CD4-positive, alpha-beta memory T cell (primary cell): ENCODE measurements at regions of chr11 and their contacts with region 1.

Region 1: GRCh38 chr11:95231127-95231880 is at the start of gene SESN3:
- DNase-seq: peak; percentile 99
- H3K4me3 ChIP-seq: peak within 1 kb of the TSS; percentile 81 to 89
- H3K4me3 Mint-ChIP-seq: peak within 1 kb of the TSS; percentile 92 to 99 (median 97)
- H3K27ac ChIP-seq: peak within 1 kb of the TSS; percentile 68
- H3K27ac Mint-ChIP-seq: peak within 1 kb of the TSS; percentile 85 to 96 (median 93)
- H3K4me1 ChIP-seq: peaks cover 50% of the 10 kb centered on the region
- H3K4me1 Mint-ChIP-seq: peaks cover 28 to 59% (median 34%) of the 10 kb centered on the region in 4 donors
- H3K27me3 ChIP-seq: no peaks in the 10 kb centered on the region
- H3K27me3 Mint-ChIP-seq: no peaks in the 10 kb centered on the region
- total RNA-seq, gene SESN3: 204 to 211 TPM

Region 2: DNA sequence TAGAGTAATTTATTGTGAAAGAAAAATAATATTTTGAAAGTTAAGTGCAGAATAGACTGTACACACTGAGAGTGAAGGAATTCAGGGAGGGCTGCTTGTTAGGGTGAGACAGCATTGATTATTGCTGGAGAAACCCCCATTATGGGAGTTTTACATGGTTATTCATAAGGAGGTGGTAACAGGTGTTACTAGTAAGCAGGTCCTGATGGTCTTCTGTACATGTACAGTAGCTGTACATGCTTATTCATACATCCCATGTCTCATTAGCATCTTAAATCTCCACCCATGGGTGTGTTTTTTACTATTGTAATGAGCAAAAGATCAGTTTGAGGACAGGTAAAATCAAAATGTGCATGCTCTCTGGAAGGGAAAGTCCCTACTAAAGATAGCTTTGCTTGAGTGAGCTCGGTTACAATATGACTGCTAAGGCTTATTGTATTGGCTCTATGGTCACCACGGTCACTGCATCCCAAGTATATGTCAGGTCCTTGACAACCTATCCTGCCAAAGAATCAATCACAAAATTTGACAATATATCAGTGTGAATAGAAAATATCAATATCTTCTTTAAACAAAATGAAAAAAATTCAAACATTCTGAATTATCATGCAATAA is 175.9 kb before region 1 on chr11:
- CTCF ChIA-PET with region 1: no interaction called
- POLR2A ChIA-PET with region 1: no interaction called
- intact Hi-C with region 1: no loop called
- DNase-seq: no peak
- H3K4me3 ChIP-seq: no peak overlapping the region
- H3K4me3 Mint-ChIP-seq: no peak overlapping the region
- H3K27ac ChIP-seq: no peak overlapping the region
- H3K27ac Mint-ChIP-seq: no peak overlapping the region
- H3K4me1 ChIP-seq: no peaks in the 10 kb centered on the region
- H3K4me1 Mint-ChIP-seq: no peaks in the 10 kb centered on the region
- H3K27me3 ChIP-seq: peaks cover 5% of the 10 kb centered on the region
- H3K27me3 Mint-ChIP-seq: peaks cover 24 to 30% of the 10 kb centered on the region in 2 donors

Region 3: GRCh38 chr11:95150946-95151684 is 80.2 kb before region 1 on chr11:
- CTCF ChIA-PET with region 1: interaction called, 77 read pairs
- POLR2A ChIA-PET with region 1: interaction called, 97 read pairs
- intact Hi-C with region 1: loop called (anchors 1 kb)
- DNase-seq: peak; percentile 91 to 93 (median 91)
- H3K4me3 ChIP-seq: peak overlapping the region; percentile 45 to 87
- H3K4me3 Mint-ChIP-seq: peak overlapping the region; percentile 85 to 96 (median 90)
- H3K27ac ChIP-seq: peak overlapping the region; percentile 80
- H3K27ac Mint-ChIP-seq: peak overlapping the region; percentile 90 to 99 (median 97)
- H3K4me1 ChIP-seq: peaks cover 35% of the 10 kb centered on the region
- H3K4me1 Mint-ChIP-seq: peaks cover 26 to 44% (median 36%) of the 10 kb centered on the region in 4 donors
- H3K27me3 ChIP-seq: no peaks in the 10 kb centered on the region
- H3K27me3 Mint-ChIP-seq: peaks cover 2 to 8% of the 10 kb centered on the region in 2 donors

Region 4: GRCh38 chr11:95242091-95242844 is 11.0 kb after region 1 on chr11:
- CTCF ChIA-PET with region 1: interaction called, 19 read pairs
- POLR2A ChIA-PET with region 1: interaction called, 18 read pairs
- intact Hi-C with region 1: no loop called
- DNase-seq: no peak
- H3K4me3 ChIP-seq: no peak overlapping the region
- H3K4me3 Mint-ChIP-seq: no peak overlapping the region
- H3K27ac ChIP-seq: no peak overlapping the region
- H3K27ac Mint-ChIP-seq: peak overlapping the region in 1 of 7 donors; percentile 73
- H3K4me1 ChIP-seq: no peaks in the 10 kb centered on the region
- H3K4me1 Mint-ChIP-seq: peaks cover 0 to 3% (median 1%) of the 10 kb centered on the region in 4 donors
- H3K27me3 ChIP-seq: no peaks in the 10 kb centered on the region
- H3K27me3 Mint-ChIP-seq: peaks cover 1 to 5% of the 10 kb centered on the region in 2 donors

Region 5: GRCh38 chr11:95337175-95337957 is 106.1 kb after region 1 on chr11:
- CTCF ChIA-PET with region 1: interaction called, 3 read pairs
- POLR2A ChIA-PET with region 1: interaction called, 18 read pairs
- intact Hi-C with region 1: loop called (anchors 2 kb)
- DNase-seq: peak; percentile 32 to 40 (median 35)
- H3K4me3 ChIP-seq: peak overlapping the region in 1 of 2 donors; percentile 17
- H3K4me3 Mint-ChIP-seq: no peak overlapping the region
- H3K27ac ChIP-seq: peak overlapping the region; percentile 33
- H3K27ac Mint-ChIP-seq: no peak overlapping the region
- H3K4me1 ChIP-seq: peaks cover 19% of the 10 kb centered on the region
- H3K4me1 Mint-ChIP-seq: peaks cover 0 to 6% (median 0%) of the 10 kb centered on the region in 4 donors
- H3K27me3 ChIP-seq: no peaks in the 10 kb centered on the region
- H3K27me3 Mint-ChIP-seq: no peaks in the 10 kb centered on the region

Region 6: DNA sequence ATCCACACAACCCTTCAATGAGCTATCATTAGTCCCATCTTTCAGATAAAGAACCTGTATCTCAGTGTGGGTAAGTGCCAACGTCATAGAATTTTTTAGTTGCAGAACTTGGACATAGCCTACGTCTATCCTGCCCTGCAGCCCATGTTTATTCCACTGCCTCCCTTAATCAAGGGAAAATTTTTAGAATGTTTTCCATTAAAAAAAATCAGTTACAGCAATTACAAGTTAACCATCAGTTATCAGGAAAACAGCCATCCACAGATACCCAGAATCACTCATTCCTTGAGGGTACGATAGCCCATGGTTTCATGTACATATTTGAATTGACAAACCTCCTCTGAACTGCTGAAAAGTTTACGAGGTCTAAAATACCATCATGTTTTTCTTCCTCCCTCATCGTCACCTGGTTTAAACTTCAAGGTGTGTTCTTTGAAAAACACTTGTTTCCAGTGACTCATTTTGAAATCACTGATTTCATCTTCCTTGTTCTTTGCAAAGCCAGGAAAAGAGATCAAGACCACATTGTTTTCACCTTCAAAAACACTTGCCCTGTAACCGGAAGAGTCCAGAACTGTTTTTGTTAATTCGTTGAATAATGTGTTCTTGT is 457.4 kb after region 1 on chr11:
- CTCF ChIA-PET with region 1: interaction called, 7 read pairs
- POLR2A ChIA-PET with region 1: interaction called, 77 read pairs
- intact Hi-C with region 1: loop called (anchors 2 kb)
- DNase-seq: peak; percentile 65 to 69 (median 66)
- H3K4me3 ChIP-seq: peak overlapping the region in 1 of 2 donors; percentile 16
- H3K4me3 Mint-ChIP-seq: peak overlapping the region in 1 of 8 donors; percentile 1
- H3K27ac ChIP-seq: peak overlapping the region; percentile 41
- H3K27ac Mint-ChIP-seq: no peak overlapping the region
- H3K4me1 ChIP-seq: peaks cover 80% of the 10 kb centered on the region
- H3K4me1 Mint-ChIP-seq: peaks cover 16 to 25% (median 23%) of the 10 kb centered on the region in 4 donors
- H3K27me3 ChIP-seq: no peaks in the 10 kb centered on the region
- H3K27me3 Mint-ChIP-seq: no peaks in the 10 kb centered on the region

Region 7: DNA sequence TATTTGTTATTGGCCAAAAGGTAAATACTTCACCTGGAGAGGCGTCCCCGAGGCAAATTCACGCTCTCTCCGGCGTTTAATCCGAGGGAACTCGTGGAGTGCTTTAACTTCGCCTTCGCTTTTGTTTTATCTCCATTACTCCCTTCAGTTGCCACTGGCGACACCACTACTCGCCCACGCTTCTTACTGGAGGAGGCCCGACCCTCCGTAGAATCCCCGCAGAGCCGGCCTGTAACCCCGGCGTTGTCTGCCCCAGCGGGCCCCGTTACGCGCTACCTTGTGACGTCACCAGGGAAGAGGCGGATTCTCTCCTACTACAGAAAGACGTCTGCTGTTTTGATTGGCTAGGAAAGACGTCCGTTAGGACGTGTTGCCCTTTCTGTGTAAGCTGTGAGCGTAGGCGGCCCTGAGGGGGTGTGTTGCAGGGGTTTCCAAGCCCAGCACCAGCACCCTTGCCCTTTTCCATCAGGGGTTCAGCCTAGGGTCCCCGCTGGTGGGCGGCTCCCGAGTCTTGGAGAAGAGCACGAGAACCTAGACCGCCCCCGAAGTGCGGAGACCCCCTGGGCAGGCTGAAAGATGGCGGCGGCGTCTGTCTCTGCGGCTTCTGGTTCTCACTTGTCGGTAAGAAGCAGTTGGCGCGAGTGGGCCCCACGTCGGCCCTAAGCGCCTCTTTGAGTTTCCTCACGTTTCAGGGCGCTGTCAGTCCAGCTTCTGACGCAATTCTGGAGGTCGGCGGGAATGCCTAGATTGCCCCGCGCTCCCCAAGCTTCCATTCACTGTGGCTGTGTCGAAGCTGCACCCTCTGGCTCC is 559.0 kb after region 1 on chr11 and contains the start of gene CEP57:
- CTCF ChIA-PET with region 1: interaction called, 5 read pairs
- POLR2A ChIA-PET with region 1: interaction called, 51 read pairs
- intact Hi-C with region 1: loop called (anchors 1 kb)
- DNase-seq: peak; percentile 95 to 99 (median 96)
- H3K4me3 ChIP-seq: peak within 1 kb of the TSS; percentile 68 to 98
- H3K4me3 Mint-ChIP-seq: peak within 1 kb of the TSS; percentile 97 to 100 (median 99)
- H3K27ac ChIP-seq: peak within 1 kb of the TSS; percentile 99
- H3K27ac Mint-ChIP-seq: peak within 1 kb of the TSS; percentile 100
- H3K4me1 ChIP-seq: peaks cover 47% of the 10 kb centered on the region
- H3K4me1 Mint-ChIP-seq: peaks cover 43 to 70% (median 56%) of the 10 kb centered on the region in 4 donors
- H3K27me3 ChIP-seq: no peaks in the 10 kb centered on the region
- H3K27me3 Mint-ChIP-seq: no peaks in the 10 kb centered on the region
- total RNA-seq, gene CEP57: 76.0 to 78.9 TPM